Posterior cingulate gyrus (tissue), 11 donors: ENCODE measurements at regions of chr1 and their contacts with region 1.

Region 1: DNA sequence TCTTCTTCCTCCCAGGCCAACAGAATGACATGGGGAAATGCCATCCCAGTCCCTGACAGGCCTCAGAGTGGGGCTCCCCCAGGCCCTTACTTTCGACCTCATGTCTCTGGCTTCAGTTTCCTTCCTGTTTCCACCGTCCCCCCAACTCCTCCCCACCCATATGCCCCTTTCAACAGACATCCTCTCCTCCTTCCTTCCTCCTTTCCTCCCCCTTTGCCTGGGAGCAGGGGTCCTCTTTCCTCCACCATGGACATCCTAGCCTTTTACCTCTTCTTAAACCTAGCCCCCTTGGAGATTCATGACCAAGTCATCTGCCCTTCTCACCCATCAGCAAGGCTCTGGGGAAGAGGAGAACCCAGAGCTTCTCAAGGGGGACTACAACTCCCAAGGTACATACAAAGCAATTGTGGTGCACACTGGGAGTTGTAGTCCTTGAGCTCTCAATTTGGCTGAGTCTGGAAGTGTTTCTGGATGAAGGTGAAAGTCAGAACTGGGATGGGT is 4.0 kb downstream of the ZBTB7B start:
- DNase-seq: peak in 2 of 10 donors; percentile 37 to 75

Region 2: GRCh38 chr1:155044812-155045690 is 38.4 kb after region 1 on chr1:
- intact Hi-C with region 1: loop called (anchors 5 kb)
- DNase-seq: peak in 8 of 10 donors; percentile 55 to 96 (median 70)

Region 3: DNA sequence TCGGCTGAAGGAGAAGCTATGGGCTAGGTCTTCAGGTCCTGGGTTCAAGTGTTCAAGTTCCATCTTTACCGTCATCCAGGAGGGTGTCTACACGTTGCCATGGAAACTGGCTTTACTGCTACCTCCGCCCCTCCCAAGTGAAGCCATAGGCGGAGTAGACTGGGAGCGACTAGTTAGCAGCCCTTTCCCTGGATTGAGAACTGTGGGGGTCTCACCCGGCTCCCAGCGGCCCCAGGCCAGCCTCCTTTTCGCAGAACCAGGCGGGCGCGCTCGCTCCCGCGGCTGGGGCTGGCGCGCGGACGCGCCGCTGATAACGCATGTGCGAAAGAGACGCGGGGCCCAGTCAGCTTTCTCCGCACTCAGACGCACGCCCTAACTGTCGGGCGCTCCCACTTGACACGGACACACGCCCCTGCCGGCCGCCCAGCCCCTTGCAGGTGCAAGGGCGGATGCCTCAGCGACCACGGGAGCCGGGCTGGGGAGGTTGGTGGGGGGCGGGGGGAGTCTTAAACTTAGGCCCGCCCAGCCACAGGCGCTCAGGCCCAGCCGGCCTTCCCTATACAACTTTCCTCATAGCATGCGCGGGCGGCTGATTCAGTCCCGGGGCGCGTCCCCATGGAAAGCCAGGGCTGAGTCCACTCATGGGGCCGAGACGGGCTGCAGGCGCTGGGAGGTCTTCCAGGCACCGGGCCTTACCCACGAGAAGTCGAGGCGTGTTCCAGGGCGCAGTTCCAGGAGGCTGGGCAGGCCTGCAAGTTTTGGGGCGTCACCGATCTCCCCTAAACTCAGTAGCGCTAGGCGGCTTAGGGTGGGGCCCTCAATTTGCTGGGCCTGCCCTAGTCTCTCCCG is 64.3 kb after region 1 on chr1:
- intact Hi-C with region 1: no loop called
- DNase-seq: peak; percentile 46 to 96 (median 72)